Head of caudate nucleus (tissue), 42 donors: ENCODE measurements at regions of chr9 and their contacts with region 1.

Region 1: GRCh38 chr9:4297786-4298254 is 2.0 kb downstream of the GLIS3 start:
- DNase-seq: peak in 40 of 42 donors; percentile 11 to 77 (median 46)

Region 2: DNA sequence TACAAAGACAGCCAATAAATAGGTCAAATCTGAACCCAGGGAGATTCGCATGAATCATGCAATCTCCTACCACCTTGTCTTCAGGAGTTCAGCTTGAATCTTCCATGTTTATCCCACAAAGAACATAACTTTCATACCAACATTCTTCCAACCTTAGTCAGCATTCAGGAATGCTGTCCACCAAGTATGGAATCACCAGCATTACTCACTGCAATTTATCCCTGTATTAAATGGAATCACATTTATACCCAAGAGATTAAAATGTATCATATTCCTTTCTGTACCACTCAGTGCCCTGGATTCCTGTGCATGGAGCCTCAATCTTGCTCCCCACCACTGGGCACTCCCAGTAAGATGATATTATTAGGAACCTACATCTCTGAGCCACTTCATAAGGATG is 160.6 kb before region 1 on chr9:
- intact Hi-C with region 1: no loop called
- DNase-seq: no peak

Region 3: GRCh38 chr9:4235871-4236804 is 61.7 kb before region 1 on chr9:
- intact Hi-C with region 1: no loop called
- DNase-seq: no peak

Region 4: GRCh38 chr9:4339357-4339756 is 41.5 kb after region 1 on chr9:
- intact Hi-C with region 1: loop called (anchors 2 kb)
- DNase-seq: peak in 41 of 42 donors; percentile 54 to 91 (median 78)

Region 5: DNA sequence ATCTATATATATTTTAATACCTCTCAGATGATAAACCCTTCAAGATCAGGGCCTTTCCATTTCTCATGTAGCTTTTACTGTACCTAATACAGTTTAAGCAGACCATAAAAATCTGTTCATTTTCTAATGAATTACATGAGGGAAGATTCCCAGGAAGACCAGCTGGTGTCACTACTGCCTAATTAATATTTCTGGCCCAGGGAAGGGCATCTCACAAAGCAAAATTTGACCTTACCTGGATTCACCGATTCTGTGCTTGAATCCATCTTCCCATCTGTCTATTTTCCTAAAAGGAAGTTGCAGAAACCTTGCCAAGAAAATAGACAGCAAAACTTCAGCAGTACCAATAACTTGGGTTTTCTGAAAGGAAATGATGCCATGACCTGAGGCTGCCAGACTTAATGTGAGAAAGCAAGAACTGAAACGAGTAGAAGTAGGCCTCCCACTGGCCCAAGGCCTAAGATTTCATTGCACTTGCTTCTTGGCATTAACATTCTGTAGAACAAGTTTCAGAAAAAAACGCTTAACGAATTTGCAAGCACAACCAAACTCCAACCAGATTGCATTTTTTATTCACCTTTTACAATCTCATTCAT is 85.0 kb after region 1 on chr9:
- intact Hi-C with region 1: no loop called
- DNase-seq: peak in 10 of 42 donors; percentile 10 to 56 (median 31)